PC-3 (cell line): ENCODE measurements at regions of chr2 and their contacts with region 1.

Region 1: DNA sequence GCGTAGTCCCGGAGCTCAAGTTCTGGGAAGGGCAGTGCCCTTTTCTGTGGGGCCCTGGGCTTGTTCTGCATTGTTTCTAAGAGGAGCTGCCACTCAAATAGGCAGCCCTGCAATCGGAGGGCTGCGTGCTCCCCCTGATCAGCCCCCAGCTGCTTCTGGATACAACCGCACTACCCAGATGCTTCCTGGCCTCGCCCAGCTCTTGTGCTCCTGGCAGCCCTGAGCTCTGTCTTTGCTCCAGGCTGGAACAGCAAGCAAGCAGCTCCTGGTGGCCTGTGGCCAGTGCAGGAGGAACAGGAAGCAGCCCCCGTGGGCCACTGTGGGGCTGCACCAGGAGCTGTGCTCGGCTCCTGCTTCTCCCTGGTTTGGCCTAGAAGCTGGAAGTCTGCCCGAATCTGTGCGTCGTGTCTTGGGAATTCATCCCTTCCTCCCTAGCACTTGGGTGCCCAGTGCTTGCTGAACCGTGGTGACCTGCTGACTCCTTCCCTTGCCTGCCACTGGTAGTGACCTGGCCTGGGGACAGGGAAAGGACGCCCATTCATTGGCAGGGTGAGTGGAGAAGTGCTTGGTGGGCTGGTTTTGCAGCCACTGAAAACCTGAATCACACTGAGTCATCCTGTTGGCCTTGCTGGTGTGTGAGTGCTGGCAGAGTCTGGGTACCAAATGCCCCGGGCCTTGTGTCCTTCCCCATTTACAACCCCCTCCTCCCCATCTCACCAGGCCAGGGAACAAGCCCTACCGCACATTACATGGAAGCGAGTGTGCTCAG is 27.3 kb upstream of the NTSR2 start:
- DNase-seq: peak; percentile 99
- ATAC-seq: peak; percentile 79
- H3K4me3 ChIP-seq: no peak overlapping the region; the same call in 1 of the 2 replicates
- H3K27ac ChIP-seq: peak overlapping the region; percentile 92
- H3K4me1 ChIP-seq: peaks cover 44% of the 10 kb centered on the region
- H3K27me3 ChIP-seq: no peaks in the 10 kb centered on the region
- CTCF ChIP-seq: no peak

Region 2: DNA sequence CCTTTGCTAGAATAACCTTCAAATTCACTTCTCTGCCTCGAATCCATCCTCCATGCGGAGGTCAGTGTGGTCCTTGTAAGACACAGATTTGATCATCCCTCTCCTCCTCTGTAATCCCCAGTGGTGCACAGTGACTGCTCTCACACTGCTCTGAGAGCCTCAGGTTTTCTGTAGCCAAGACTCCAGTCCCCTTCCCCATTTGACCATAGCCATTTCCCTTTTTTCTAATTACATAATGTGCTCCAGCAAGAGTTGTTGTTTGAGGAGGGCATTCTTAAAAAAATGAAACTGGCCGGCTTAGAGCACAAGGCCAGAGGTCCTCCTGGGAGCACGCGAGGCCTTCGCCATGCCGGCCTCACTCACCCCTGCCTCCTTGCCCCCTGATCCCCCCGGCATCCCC is 14.5 kb after region 1 on chr2:
- CTCF ChIA-PET with region 1: interaction called, 3 read pairs
- POLR2A ChIA-PET with region 1: no interaction called
- intact Hi-C with region 1: loop called (anchors 2 kb)
- DNase-seq: no peak
- ATAC-seq: no peak
- H3K4me3 ChIP-seq: no peak overlapping the region
- H3K27ac ChIP-seq: peak overlapping the region; percentile 88
- H3K4me1 ChIP-seq: peaks cover 63% of the 10 kb centered on the region
- H3K27me3 ChIP-seq: no peaks in the 10 kb centered on the region
- CTCF ChIP-seq: no peak

Region 3: GRCh38 chr2:11746376-11746806 is 49.1 kb after region 1 on chr2 and contains the start of gene LPIN1:
- CTCF ChIA-PET with region 1: interaction called, 13 read pairs
- POLR2A ChIA-PET with region 1: interaction called, 6 read pairs
- intact Hi-C with region 1: loop called (anchors 1 kb)
- DNase-seq: peak; percentile 81
- ATAC-seq: peak; percentile 65
- H3K4me3 ChIP-seq: peak within 1 kb of the TSS; percentile 92
- H3K27ac ChIP-seq: peak within 1 kb of the TSS; percentile 26; the same call in 1 of the 2 replicates
- H3K4me1 ChIP-seq: peaks cover 54% of the 10 kb centered on the region
- H3K27me3 ChIP-seq: no peaks in the 10 kb centered on the region
- CTCF ChIP-seq: no peak
- total RNA-seq, gene LPIN1: 40.9 and 46.9 TPM in 2 replicates